ENCODE measurements at regions of chr14 and their contacts with region 1.

Region 1: DNA sequence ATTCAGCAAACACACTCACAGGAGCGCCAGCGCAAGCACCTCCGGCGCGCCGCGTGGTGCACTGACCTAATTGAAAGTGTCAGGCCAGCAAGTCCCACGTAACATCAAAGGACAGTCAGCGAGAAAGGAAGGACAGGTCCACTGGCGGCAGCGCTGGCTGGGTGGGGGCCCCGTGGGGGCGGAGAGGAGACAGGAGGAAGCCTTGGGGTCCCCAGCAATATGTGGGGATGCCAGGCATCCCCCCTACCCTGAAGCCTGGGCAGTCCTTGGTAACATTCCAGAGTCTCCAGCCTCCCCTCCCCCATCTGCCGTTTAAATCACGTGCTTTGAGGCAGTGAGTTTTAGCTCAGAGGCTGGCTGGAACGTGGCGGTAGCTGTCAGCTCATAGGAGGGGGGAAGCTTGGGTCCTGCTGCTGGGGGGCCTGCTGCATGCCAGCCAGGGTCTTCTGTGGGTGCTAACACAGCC is 159.2 kb downstream of the CALM1 start:
- DNase-seq: no peak
- ATAC-seq: no peak
- H3K4me3 ChIP-seq: no peak overlapping the region
- H3K4me3 Mint-ChIP-seq: no peak overlapping the region
- H3K27ac ChIP-seq: no peak overlapping the region
- H3K27ac Mint-ChIP-seq: no peak overlapping the region
- H3K4me1 ChIP-seq: no peaks in the 10 kb centered on the region
- H3K4me1 Mint-ChIP-seq: no peaks in the 10 kb centered on the region
- H3K27me3 ChIP-seq: no peaks in the 10 kb centered on the region
- H3K27me3 Mint-ChIP-seq: no peaks in the 10 kb centered on the region
- CTCF ChIP-seq: no peak

Region 2: GRCh38 chr14:90109646-90110257 is 446.3 kb before region 1 on chr14:
- CTCF ChIA-PET with region 1: no interaction called
- POLR2A ChIA-PET with region 1: no interaction called
- intact Hi-C with region 1: loop called (anchors 10 kb)
- DNase-seq: no peak
- ATAC-seq: no peak
- H3K4me3 ChIP-seq: no peak overlapping the region
- H3K4me3 Mint-ChIP-seq: no peak overlapping the region
- H3K27ac ChIP-seq: no peak overlapping the region
- H3K27ac Mint-ChIP-seq: no peak overlapping the region
- H3K4me1 ChIP-seq: no peaks in the 10 kb centered on the region
- H3K4me1 Mint-ChIP-seq: no peaks in the 10 kb centered on the region
- H3K27me3 ChIP-seq: peaks cover 0 to 4% (median 0%) of the 10 kb centered on the region in 4 experiments
- H3K27me3 Mint-ChIP-seq: peaks cover 13% of the 10 kb centered on the region
- CTCF ChIP-seq: peak; percentile 13

Measured in B cell (primary cell).